ENCODE measurements at regions of chr11 and their contacts with region 1.

Region 1: GRCh38 chr11:2420502-2421225 is 20.1 kb downstream of the TSSC4 start:
- DNase-seq: peak; percentile 60 to 78 (median 67)
- H3K4me3 ChIP-seq: no peak overlapping the region
- H3K4me3 Mint-ChIP-seq: no peak overlapping the region
- H3K27ac ChIP-seq: no peak overlapping the region
- H3K27ac Mint-ChIP-seq: peak overlapping the region in 1 of 8 donors; percentile 24
- H3K4me1 ChIP-seq: peaks cover 9% of the 10 kb centered on the region
- H3K4me1 Mint-ChIP-seq: peaks cover 0 to 3% (median 2%) of the 10 kb centered on the region in 3 donors
- H3K27me3 ChIP-seq: no peaks in the 10 kb centered on the region
- H3K27me3 Mint-ChIP-seq: no peaks in the 10 kb centered on the region

Region 2: GRCh38 chr11:2186669-2187279 is 233.9 kb before region 1 on chr11:
- CTCF ChIA-PET with region 1: interaction called, 38 read pairs
- POLR2A ChIA-PET with region 1: no interaction called
- DNase-seq: peak in 3 of 5 donors; percentile 19 to 62 (median 45)
- H3K4me3 ChIP-seq: no peak overlapping the region
- H3K4me3 Mint-ChIP-seq: no peak overlapping the region
- H3K27ac ChIP-seq: no peak overlapping the region
- H3K27ac Mint-ChIP-seq: no peak overlapping the region
- H3K4me1 ChIP-seq: peaks cover 6% of the 10 kb centered on the region
- H3K4me1 Mint-ChIP-seq: peaks cover 0 to 1% (median 0%) of the 10 kb centered on the region in 3 donors
- H3K27me3 ChIP-seq: no peaks in the 10 kb centered on the region
- H3K27me3 Mint-ChIP-seq: peaks cover 6 to 33% of the 10 kb centered on the region in 2 donors

Region 3: GRCh38 chr11:2293984-2294925 is 126.4 kb before region 1 on chr11:
- CTCF ChIA-PET with region 1: interaction called, 317 read pairs
- POLR2A ChIA-PET with region 1: no interaction called
- DNase-seq: no peak
- H3K4me3 ChIP-seq: no peak overlapping the region
- H3K4me3 Mint-ChIP-seq: peak overlapping the region in 1 of 7 donors; percentile 56
- H3K27ac ChIP-seq: no peak overlapping the region
- H3K27ac Mint-ChIP-seq: peak overlapping the region in 6 of 8 donors; percentile 31 to 94 (median 73)
- H3K4me1 ChIP-seq: peaks cover 29% of the 10 kb centered on the region
- H3K4me1 Mint-ChIP-seq: peaks cover 18 to 60% (median 34%) of the 10 kb centered on the region in 3 donors
- H3K27me3 ChIP-seq: no peaks in the 10 kb centered on the region
- H3K27me3 Mint-ChIP-seq: peaks cover 2 to 9% of the 10 kb centered on the region in 2 donors

Region 4: GRCh38 chr11:2314525-2315394 is 105.9 kb before region 1 on chr11:
- CTCF ChIA-PET with region 1: interaction called, 13 read pairs
- POLR2A ChIA-PET with region 1: no interaction called
- DNase-seq: no peak
- H3K4me3 ChIP-seq: no peak overlapping the region
- H3K4me3 Mint-ChIP-seq: no peak overlapping the region
- H3K27ac ChIP-seq: no peak overlapping the region
- H3K27ac Mint-ChIP-seq: peak overlapping the region in 1 of 8 donors; percentile 51
- H3K4me1 ChIP-seq: no peaks in the 10 kb centered on the region
- H3K4me1 Mint-ChIP-seq: peaks cover 5 to 23% (median 6%) of the 10 kb centered on the region in 3 donors
- H3K27me3 ChIP-seq: no peaks in the 10 kb centered on the region
- H3K27me3 Mint-ChIP-seq: no peaks in the 10 kb centered on the region

Region 5: GRCh38 chr11:2400069-2400760 is 20.4 kb before region 1 on chr11 and contains the start of gene TSSC4:
- CTCF ChIA-PET with region 1: interaction called, 18 read pairs
- POLR2A ChIA-PET with region 1: interaction called, 3 read pairs
- DNase-seq: peak; percentile 99 to 100 (median 100)
- H3K4me3 ChIP-seq: peak within 1 kb of the TSS; percentile 89
- H3K4me3 Mint-ChIP-seq: peak within 1 kb of the TSS; percentile 88 to 99 (median 91)
- H3K27ac ChIP-seq: peak within 1 kb of the TSS; percentile 97
- H3K27ac Mint-ChIP-seq: peak within 1 kb of the TSS; percentile 90 to 98 (median 96)
- H3K4me1 ChIP-seq: peaks cover 24% of the 10 kb centered on the region
- H3K4me1 Mint-ChIP-seq: peaks cover 10 to 34% (median 15%) of the 10 kb centered on the region in 3 donors
- H3K27me3 ChIP-seq: no peaks in the 10 kb centered on the region
- H3K27me3 Mint-ChIP-seq: peaks cover 0 to 3% of the 10 kb centered on the region in 2 donors
- total RNA-seq, gene TSSC4: 79.6 to 84.1 TPM

Region 6: GRCh38 chr11:2480874-2481220 is 60.2 kb after region 1 on chr11:
- CTCF ChIA-PET with region 1: no interaction called
- POLR2A ChIA-PET with region 1: no interaction called
- DNase-seq: no peak
- H3K4me3 ChIP-seq: no peak overlapping the region
- H3K4me3 Mint-ChIP-seq: peak overlapping the region in 2 of 7 donors; percentile 7 to 40
- H3K27ac ChIP-seq: no peak overlapping the region
- H3K27ac Mint-ChIP-seq: peak overlapping the region in 1 of 8 donors; percentile 66
- H3K4me1 ChIP-seq: no peaks in the 10 kb centered on the region
- H3K4me1 Mint-ChIP-seq: peaks cover 8 to 17% (median 11%) of the 10 kb centered on the region in 3 donors
- H3K27me3 ChIP-seq: no peaks in the 10 kb centered on the region
- H3K27me3 Mint-ChIP-seq: peaks cover 5% of the 10 kb centered on the region in 2 donors

Measured in CD8-positive, alpha-beta memory T cell (primary cell).